Dorsolateral prefrontal cortex (tissue), 120 donors: ENCODE measurements at regions of chr2 and their contacts with region 1.

Region 1: GRCh38 chr2:64488050-64488974 is 34.4 kb downstream of the LGALSL start:
- DNase-seq: peak in 8 of 10 donors; percentile 34 to 73 (median 56)
- H3K4me3 ChIP-seq: peak overlapping the region in 4 of 59 donors; percentile 10 to 23 (median 12)
- H3K27ac ChIP-seq: no peak overlapping the region
- H3K27me3 ChIP-seq: peaks cover 0 to 4% (median 0%) of the 10 kb centered on the region in 45 donors
- CTCF ChIP-seq: peak; percentile 81 to 98 (median 92)

Region 2: GRCh38 chr2:64040161-64040560 is 448.2 kb before region 1 on chr2:
- intact Hi-C with region 1: loop called (anchors 5 to 10 kb)
- DNase-seq: no peak
- H3K4me3 ChIP-seq: no peak overlapping the region
- H3K27ac ChIP-seq: no peak overlapping the region
- H3K27me3 ChIP-seq: no peaks in the 10 kb centered on the region
- CTCF ChIP-seq: no peak

Region 3: DNA sequence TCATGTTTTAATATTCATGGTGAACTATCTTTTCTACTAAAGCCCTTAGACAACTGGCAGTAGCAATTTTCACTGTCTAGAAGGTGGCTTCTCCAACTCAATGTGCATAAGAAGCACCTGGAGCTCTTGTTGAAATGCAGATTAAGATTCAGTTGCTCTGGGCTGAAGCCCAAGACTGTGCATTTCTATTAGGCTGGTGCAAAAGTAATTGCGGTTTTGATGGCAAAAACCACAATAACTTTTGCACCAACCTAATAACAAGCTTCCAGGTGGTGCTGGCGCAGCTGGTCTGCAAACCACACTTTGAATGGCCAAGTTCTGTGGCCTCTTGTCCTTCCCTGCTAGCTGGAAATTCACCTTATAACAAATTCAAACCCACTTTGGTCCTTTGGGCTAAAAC is 442.4 kb before region 1 on chr2:
- intact Hi-C with region 1: loop called (anchors 5 to 10 kb)
- DNase-seq: no peak
- H3K4me3 ChIP-seq: no peak overlapping the region
- H3K27ac ChIP-seq: no peak overlapping the region
- H3K27me3 ChIP-seq: no peaks in the 10 kb centered on the region
- CTCF ChIP-seq: no peak

Region 4: GRCh38 chr2:64558445-64559081 is 70.3 kb after region 1 on chr2:
- intact Hi-C with region 1: no loop called
- DNase-seq: no peak
- H3K4me3 ChIP-seq: no peak overlapping the region
- H3K27ac ChIP-seq: no peak overlapping the region
- H3K27me3 ChIP-seq: no peaks in the 10 kb centered on the region
- CTCF ChIP-seq: no peak